HepG2 (cell line): ENCODE measurements at regions of chr14 and their contacts with region 1.

Region 1: GRCh38 chr14:85934886-85935254 is 404.9 kb downstream of the FLRT2 start:
- DNase-seq: no peak
- ATAC-seq: peak; percentile 33
- H3K4me3 ChIP-seq: peak overlapping the region; percentile 55 to 86 (median 62)
- H3K27ac ChIP-seq: no peak overlapping the region
- H3K4me1 ChIP-seq: no peaks in the 10 kb centered on the region
- H3K27me3 ChIP-seq: no peaks in the 10 kb centered on the region
- CTCF ChIP-seq: no peak
- EP300 ChIP-seq: no peak
- POLR2A ChIP-seq: no peak
- RAD21 ChIP-seq: no peak

Region 2: DNA sequence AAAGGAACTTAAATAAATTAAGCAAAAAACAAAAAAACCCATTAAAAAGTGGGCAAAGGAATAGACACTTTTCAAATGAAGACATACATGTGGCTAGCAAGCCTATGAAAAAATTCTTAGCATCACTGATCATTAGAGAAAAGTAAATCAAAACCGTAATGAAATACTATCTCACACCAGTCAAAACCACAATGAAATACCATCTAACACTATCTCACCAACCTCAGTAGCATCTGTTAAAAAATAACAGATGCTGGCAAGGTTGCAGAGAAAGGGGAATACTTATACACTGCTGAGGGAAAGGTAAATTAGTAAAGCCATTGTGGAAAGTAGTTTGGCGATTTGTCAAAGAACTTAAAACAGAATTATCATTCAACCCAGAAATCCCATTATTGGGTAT is 23.8 kb before region 1 on chr14:
- CTCF ChIA-PET with region 1: no interaction called
- POLR2A ChIA-PET with region 1: no interaction called
- in situ Hi-C with region 1: no loop called
- intact Hi-C with region 1: loop called (anchors 1 kb)
- DNase-seq: no peak
- ATAC-seq: no peak
- H3K4me3 ChIP-seq: no peak overlapping the region
- H3K27ac ChIP-seq: no peak overlapping the region
- H3K4me1 ChIP-seq: no peaks in the 10 kb centered on the region
- H3K27me3 ChIP-seq: no peaks in the 10 kb centered on the region
- CTCF ChIP-seq: no peak
- EP300 ChIP-seq: no peak
- POLR2A ChIP-seq: no peak
- RAD21 ChIP-seq: no peak